ENCODE measurements at regions of chr16 and their contacts with region 1.

Region 1: GRCh38 chr16:49755313-49755620 is 100.6 kb downstream of the ZNF423 start:
- DNase-seq: peak; percentile 40
- H3K4me3 Mint-ChIP-seq: peak overlapping the region; percentile 32
- H3K27ac Mint-ChIP-seq: no peak overlapping the region
- H3K4me1 Mint-ChIP-seq: no peaks in the 10 kb centered on the region
- H3K27me3 Mint-ChIP-seq: peaks cover 75% of the 10 kb centered on the region
- CTCF ChIP-seq: peak; percentile 9

Region 2: DNA sequence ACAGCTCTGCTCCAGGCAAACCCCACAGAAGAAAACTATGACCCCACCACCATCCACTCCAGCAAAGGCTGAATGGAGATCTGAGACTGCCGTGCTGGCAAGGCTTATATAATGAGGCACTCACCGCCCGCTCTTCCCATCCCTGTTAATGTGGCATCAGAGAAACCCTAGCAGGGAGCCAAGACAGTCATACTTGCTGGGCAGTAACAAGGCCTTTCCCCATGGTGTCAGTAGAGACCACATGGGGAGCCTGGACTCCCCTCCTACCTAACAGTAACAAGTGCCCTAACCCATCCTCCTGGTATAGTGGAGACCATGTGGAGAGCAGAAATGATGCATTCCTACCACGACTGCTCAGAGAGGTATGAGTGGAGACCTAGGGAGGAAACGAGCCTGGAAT is 146.5 kb before region 1 on chr16:
- CTCF ChIA-PET with region 1: no interaction called
- POLR2A ChIA-PET with region 1: no interaction called
- intact Hi-C with region 1: loop called (anchors 5 kb)
- DNase-seq: no peak
- H3K4me3 Mint-ChIP-seq: no peak overlapping the region
- H3K27ac Mint-ChIP-seq: no peak overlapping the region
- H3K4me1 Mint-ChIP-seq: no peaks in the 10 kb centered on the region
- H3K27me3 Mint-ChIP-seq: peaks cover 99% of the 10 kb centered on the region
- CTCF ChIP-seq: peak; percentile 15